ENCODE measurements at regions of chr14 and their contacts with region 1.

Region 1: DNA sequence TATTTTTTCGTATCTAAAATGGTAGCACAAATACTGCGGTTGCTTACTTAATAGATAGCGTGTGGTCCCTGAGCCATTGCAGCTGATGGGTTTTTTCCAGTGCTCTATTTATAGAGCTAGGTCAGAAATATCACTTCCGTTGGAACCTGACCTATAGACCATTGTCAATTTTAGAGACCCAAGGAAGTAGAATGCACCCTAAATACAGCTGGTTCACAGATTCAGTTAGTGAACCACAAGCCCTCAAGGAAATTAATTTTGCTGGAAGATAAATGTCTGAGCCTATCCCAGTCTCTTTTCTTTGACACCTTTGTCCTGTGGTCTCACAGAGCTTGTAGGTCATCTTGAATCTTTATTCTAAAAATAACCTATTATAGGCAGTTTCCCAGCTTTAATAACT is 391.0 kb downstream of the ZFP36L1 start:
- DNase-seq: no peak
- ATAC-seq: peak in 2 of 4 donors; percentile 31 to 72
- H3K4me3 ChIP-seq: no peak overlapping the region
- H3K27ac ChIP-seq: peak overlapping the region in 5 of 12 donors; percentile 17 to 63 (median 40)
- H3K4me1 ChIP-seq: peaks cover 6 to 77% (median 37%) of the 10 kb centered on the region in 12 donors
- H3K27me3 ChIP-seq: no peaks in the 10 kb centered on the region
- CTCF ChIP-seq: no peak
- POLR2A ChIP-seq: no peak

Region 2: GRCh38 chr14:68412505-68413496 is 10.9 kb after region 1 on chr14:
- intact Hi-C with region 1: no loop called
- DNase-seq: no peak
- ATAC-seq: no peak
- H3K4me3 ChIP-seq: no peak overlapping the region
- H3K27ac ChIP-seq: no peak overlapping the region
- H3K4me1 ChIP-seq: peaks cover 0 to 30% (median 0%) of the 10 kb centered on the region in 12 donors
- H3K27me3 ChIP-seq: no peaks in the 10 kb centered on the region
- CTCF ChIP-seq: no peak
- POLR2A ChIP-seq: no peak

Region 3: GRCh38 chr14:68495101-68496039 is 93.5 kb after region 1 on chr14:
- intact Hi-C with region 1: no loop called
- DNase-seq: no peak
- ATAC-seq: peak in 3 of 4 donors; percentile 47 to 69 (median 69)
- H3K4me3 ChIP-seq: no peak overlapping the region
- H3K27ac ChIP-seq: peak overlapping the region in 3 of 12 donors; percentile 17 to 32 (median 23)
- H3K4me1 ChIP-seq: peaks cover 0 to 10% (median 0%) of the 10 kb centered on the region in 12 donors
- H3K27me3 ChIP-seq: no peaks in the 10 kb centered on the region
- CTCF ChIP-seq: no peak
- POLR2A ChIP-seq: no peak

Region 4: DNA sequence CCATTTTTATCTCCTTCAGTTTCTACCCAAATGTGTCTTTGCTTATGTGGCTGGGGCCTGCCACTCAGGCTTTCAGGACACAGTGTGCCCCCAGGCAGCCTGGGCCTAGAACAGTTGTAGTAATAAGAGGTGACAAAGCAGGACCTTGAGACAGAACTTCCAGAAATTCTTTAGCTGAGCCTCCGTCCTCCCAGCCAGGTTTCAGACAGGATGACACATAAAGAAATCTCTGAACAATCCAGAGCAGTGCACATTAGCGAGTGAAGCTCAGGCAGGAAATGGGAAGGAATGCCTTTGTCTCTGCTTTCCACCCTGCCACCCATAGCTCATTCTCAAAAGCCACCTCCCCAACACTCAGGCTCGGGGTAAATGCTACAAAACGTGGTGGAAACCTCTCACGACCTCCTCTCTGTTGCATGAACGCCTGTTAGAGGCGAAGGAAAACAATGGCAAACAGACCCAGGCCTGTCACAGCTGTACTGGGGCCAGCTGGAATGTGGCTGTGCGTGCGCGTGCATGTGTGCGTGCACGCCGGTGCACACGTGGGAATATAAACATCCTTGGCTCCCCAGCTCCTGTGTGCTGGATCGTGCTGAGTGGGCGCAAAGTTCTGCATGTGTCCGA is 104.3 kb after region 1 on chr14:
- intact Hi-C with region 1: loop called in 1 of 10 experiments (anchors 5 kb)
- DNase-seq: peak in 2 of 5 donors; percentile 28 to 55
- ATAC-seq: peak in 2 of 4 donors; percentile 18 to 50
- H3K4me3 ChIP-seq: no peak overlapping the region
- H3K27ac ChIP-seq: peak overlapping the region in 9 of 12 donors; percentile 4 to 62 (median 29)
- H3K4me1 ChIP-seq: peaks cover 0 to 44% (median 31%) of the 10 kb centered on the region in 12 donors
- H3K27me3 ChIP-seq: no peaks in the 10 kb centered on the region
- CTCF ChIP-seq: no peak
- POLR2A ChIP-seq: no peak

Region 5: DNA sequence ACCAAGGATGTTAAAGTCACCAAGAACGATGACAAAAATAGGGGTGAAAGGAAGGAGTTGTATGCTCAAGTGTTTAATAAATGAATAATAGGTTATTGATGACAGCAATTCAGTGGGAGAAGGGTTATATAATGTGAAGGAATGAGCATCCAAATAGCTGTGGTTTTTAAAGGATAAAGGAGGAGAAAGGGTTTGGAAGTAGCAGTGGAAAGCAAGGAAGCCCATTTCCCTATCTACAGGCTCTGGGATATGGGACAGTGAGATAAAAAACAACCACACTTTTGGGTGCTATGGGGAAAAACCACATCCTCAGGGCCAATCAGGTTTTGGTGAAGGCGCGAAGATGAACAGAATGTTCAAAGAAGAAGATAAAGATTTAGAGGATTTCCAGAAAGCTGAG is 132.4 kb after region 1 on chr14:
- intact Hi-C with region 1: loop called in 2 of 10 experiments (anchors 5 to 10 kb)
- DNase-seq: no peak
- ATAC-seq: no peak
- H3K4me3 ChIP-seq: no peak overlapping the region
- H3K27ac ChIP-seq: no peak overlapping the region
- H3K4me1 ChIP-seq: peaks cover 0 to 11% (median 4%) of the 10 kb centered on the region in 12 donors
- H3K27me3 ChIP-seq: no peaks in the 10 kb centered on the region
- CTCF ChIP-seq: no peak
- POLR2A ChIP-seq: no peak